ENCODE measurements at regions of chr7 and their contacts with region 1.

Region 1: GRCh38 chr7:1175967-1176851 is 16.2 kb upstream of the ZFAND2A start:
- DNase-seq: peak; percentile 54 to 88 (median 78)
- ATAC-seq: peak; percentile 70
- H3K4me3 ChIP-seq: peak overlapping the region; percentile 2 to 10
- H3K4me3 Mint-ChIP-seq: peak overlapping the region; percentile 70
- H3K27ac ChIP-seq: no peak overlapping the region
- H3K27ac Mint-ChIP-seq: no peak overlapping the region
- H3K4me1 ChIP-seq: peaks cover 10% of the 10 kb centered on the region
- H3K4me1 Mint-ChIP-seq: peaks cover 9% of the 10 kb centered on the region
- H3K27me3 ChIP-seq: no peaks in the 10 kb centered on the region
- H3K27me3 Mint-ChIP-seq: peaks cover 8% of the 10 kb centered on the region
- CTCF ChIP-seq: peak; percentile 94

Region 2: GRCh38 chr7:322111-322671 is 854.0 kb before region 1 on chr7:
- CTCF ChIA-PET with region 1: interaction called, 3 read pairs
- POLR2A ChIA-PET with region 1: no interaction called
- intact Hi-C with region 1: loop called in 1 of 2 experiments (anchors 10 kb)
- DNase-seq: peak; percentile 73 to 94 (median 86)
- ATAC-seq: peak; percentile 100
- H3K4me3 ChIP-seq: no peak overlapping the region
- H3K4me3 Mint-ChIP-seq: no peak overlapping the region
- H3K27ac ChIP-seq: no peak overlapping the region
- H3K27ac Mint-ChIP-seq: no peak overlapping the region
- H3K4me1 ChIP-seq: peaks cover 4% of the 10 kb centered on the region
- H3K4me1 Mint-ChIP-seq: no peaks in the 10 kb centered on the region
- H3K27me3 ChIP-seq: no peaks in the 10 kb centered on the region
- H3K27me3 Mint-ChIP-seq: peaks cover 27% of the 10 kb centered on the region
- CTCF ChIP-seq: peak; percentile 82

Region 3: GRCh38 chr7:1073142-1073977 is 102.8 kb before region 1 on chr7:
- CTCF ChIA-PET with region 1: no interaction called
- POLR2A ChIA-PET with region 1: no interaction called
- intact Hi-C with region 1: no loop called
- DNase-seq: no peak
- ATAC-seq: no peak
- H3K4me3 ChIP-seq: no peak overlapping the region
- H3K4me3 Mint-ChIP-seq: no peak overlapping the region
- H3K27ac ChIP-seq: no peak overlapping the region
- H3K27ac Mint-ChIP-seq: no peak overlapping the region
- H3K4me1 ChIP-seq: no peaks in the 10 kb centered on the region
- H3K4me1 Mint-ChIP-seq: no peaks in the 10 kb centered on the region
- H3K27me3 ChIP-seq: no peaks in the 10 kb centered on the region
- H3K27me3 Mint-ChIP-seq: no peaks in the 10 kb centered on the region
- CTCF ChIP-seq: no peak

Region 4: DNA sequence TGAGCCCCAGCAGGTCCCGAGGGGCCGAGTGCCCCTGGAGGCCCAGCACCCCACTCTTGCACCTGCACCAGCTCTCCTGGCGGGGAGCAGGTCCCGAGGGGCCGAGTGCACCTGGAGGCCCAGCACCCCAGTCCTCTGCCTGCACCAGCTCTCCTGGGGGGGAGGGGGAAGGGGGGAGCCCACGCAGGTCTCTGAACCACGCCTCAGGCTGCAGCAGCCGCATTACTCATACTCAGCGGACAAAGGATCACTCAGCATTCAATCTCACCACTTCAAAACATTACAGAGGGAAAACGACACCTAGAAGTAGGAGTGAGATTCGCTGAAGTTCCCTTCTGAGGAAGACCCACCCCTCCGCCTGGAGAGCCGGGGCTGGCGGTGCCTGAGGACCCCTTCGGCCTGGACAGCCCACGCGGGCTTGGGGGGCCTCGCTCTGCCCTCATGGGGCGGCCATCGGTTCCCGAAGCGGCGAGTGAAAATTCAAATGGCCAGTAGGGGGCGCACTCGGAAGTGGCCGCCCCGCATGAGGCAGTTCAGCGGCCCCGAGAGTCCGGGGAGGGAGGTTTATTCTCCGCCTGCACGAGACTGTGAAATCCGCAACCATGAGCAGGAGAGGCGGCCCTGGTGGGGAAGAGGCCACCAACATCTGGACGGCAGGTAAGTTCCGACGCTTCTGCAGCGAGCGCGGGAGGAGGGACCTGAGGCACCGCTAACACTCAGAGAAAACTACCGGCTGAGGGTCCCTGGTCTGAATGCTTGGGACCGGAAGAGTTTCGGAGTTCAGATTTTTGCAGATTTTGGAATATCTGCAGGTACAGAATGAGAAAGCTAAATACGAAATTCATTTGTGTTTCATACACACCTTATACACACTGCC is 89.4 kb before region 1 on chr7:
- CTCF ChIA-PET with region 1: interaction called, 9 read pairs
- POLR2A ChIA-PET with region 1: no interaction called
- intact Hi-C with region 1: loop called (anchors 1 to 2 kb)
- DNase-seq: peak; percentile 42 to 88 (median 75)
- ATAC-seq: peak; percentile 84
- H3K4me3 ChIP-seq: peak overlapping the region; percentile 18 to 58
- H3K4me3 Mint-ChIP-seq: peak overlapping the region; percentile 75
- H3K27ac ChIP-seq: no peak overlapping the region
- H3K27ac Mint-ChIP-seq: no peak overlapping the region
- H3K4me1 ChIP-seq: peaks cover 11% of the 10 kb centered on the region
- H3K4me1 Mint-ChIP-seq: peaks cover 11% of the 10 kb centered on the region
- H3K27me3 ChIP-seq: no peaks in the 10 kb centered on the region
- H3K27me3 Mint-ChIP-seq: no peaks in the 10 kb centered on the region
- CTCF ChIP-seq: peak; percentile 98

Region 5: DNA sequence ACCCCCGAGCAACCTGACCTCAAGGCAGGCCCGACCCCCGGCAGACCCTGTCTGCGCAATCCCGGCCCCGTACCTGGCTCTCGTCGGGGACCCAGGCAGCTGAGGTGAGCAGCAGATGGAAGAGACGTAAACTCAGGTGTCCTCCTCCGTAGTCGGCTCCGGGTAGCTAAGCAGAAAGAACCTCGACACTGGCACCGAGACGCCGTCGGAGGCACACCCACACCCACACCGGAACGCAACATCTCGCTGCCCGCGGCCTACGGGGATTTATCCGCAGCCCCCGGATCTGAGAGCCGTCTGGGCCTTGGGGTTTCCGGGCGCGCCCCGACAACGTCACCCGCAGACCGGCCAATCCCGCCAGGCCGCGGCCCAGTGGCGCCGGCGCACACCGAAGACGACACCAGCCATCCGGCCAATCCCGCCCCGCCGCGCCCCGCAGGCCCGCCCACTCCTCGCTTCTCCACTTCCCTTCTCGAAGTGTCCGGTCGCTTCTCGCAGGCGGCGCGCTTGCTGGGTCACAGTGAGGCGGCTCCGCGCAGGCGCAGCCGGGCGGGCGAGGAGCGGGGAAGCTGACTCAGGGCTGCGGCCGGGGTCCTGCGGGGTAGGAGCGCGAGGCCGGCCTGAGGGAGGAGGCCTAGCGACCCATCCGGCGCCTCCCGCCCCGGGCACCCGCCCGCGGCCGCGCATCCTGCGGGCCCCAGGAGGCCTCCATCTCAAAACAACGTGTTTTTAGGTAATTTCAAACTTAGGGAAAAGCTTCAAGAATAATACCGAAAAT is 16.1 kb before region 1 on chr7 and contains the start of gene ZFAND2A:
- CTCF ChIA-PET with region 1: interaction called, 10 read pairs
- POLR2A ChIA-PET with region 1: no interaction called
- intact Hi-C with region 1: no loop called
- DNase-seq: peak; percentile 97 to 99 (median 99)
- ATAC-seq: peak; percentile 98
- H3K4me3 ChIP-seq: peak within 1 kb of the TSS; percentile 98
- H3K4me3 Mint-ChIP-seq: peak within 1 kb of the TSS; percentile 90
- H3K27ac ChIP-seq: peak within 1 kb of the TSS; percentile 96 to 99
- H3K27ac Mint-ChIP-seq: peak within 1 kb of the TSS; percentile 95
- H3K4me1 ChIP-seq: peaks cover 22% of the 10 kb centered on the region
- H3K4me1 Mint-ChIP-seq: peaks cover 27% of the 10 kb centered on the region
- H3K27me3 ChIP-seq: no peaks in the 10 kb centered on the region
- H3K27me3 Mint-ChIP-seq: no peaks in the 10 kb centered on the region
- CTCF ChIP-seq: no peak
- total RNA-seq, gene ZFAND2A: 100 to 105 TPM

Region 6: DNA sequence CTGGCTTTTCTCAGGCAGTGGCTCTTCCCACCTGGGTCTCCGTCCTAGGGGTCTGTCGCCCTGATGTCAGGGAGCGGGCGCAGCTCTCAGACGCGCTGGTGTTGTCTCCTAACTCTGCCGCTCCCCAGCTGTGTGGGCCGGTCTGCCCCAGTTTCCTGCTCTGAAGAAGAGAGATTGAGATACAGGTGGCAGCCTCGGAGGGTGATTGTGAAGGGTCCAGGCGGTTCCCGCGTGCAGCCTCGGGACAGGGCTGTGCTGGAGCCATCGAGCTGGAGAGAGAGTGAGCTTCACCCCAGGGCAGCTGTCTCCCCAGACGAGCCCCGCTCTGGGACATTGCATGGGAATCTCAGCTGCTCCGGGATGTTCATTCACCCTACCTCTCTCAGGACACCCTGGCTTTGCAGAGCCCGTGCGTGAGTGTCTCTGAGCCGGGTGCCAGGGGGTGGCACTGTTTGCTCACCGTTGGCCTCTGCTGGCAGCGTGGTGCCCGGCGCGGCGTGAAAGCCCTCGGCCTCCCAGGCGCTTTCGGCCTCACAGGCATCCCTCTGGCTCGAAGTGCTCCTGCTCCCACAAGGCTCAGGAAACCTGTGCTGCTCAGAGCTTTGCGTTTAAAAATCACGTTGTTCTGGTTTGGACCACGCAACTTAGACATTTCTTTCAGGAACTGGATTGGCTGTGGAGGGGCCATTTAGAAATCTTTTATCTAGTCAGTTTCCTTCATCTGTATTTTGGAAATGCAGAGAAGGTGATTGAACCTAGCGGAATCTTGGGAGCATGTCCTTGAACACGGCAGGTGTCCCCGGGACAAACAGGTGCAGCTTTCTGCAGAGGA is 17.6 kb after region 1 on chr7:
- CTCF ChIA-PET with region 1: interaction called, 18 read pairs
- POLR2A ChIA-PET with region 1: no interaction called
- intact Hi-C with region 1: no loop called
- DNase-seq: peak in 8 of 9 experiments; percentile 11 to 73 (median 41)
- ATAC-seq: no peak
- H3K4me3 ChIP-seq: no peak overlapping the region
- H3K4me3 Mint-ChIP-seq: no peak overlapping the region
- H3K27ac ChIP-seq: no peak overlapping the region
- H3K27ac Mint-ChIP-seq: no peak overlapping the region
- H3K4me1 ChIP-seq: peaks cover 12% of the 10 kb centered on the region
- H3K4me1 Mint-ChIP-seq: peaks cover 8% of the 10 kb centered on the region
- H3K27me3 ChIP-seq: no peaks in the 10 kb centered on the region
- H3K27me3 Mint-ChIP-seq: peaks cover 17% of the 10 kb centered on the region
- CTCF ChIP-seq: peak; percentile 15

Region 7: DNA sequence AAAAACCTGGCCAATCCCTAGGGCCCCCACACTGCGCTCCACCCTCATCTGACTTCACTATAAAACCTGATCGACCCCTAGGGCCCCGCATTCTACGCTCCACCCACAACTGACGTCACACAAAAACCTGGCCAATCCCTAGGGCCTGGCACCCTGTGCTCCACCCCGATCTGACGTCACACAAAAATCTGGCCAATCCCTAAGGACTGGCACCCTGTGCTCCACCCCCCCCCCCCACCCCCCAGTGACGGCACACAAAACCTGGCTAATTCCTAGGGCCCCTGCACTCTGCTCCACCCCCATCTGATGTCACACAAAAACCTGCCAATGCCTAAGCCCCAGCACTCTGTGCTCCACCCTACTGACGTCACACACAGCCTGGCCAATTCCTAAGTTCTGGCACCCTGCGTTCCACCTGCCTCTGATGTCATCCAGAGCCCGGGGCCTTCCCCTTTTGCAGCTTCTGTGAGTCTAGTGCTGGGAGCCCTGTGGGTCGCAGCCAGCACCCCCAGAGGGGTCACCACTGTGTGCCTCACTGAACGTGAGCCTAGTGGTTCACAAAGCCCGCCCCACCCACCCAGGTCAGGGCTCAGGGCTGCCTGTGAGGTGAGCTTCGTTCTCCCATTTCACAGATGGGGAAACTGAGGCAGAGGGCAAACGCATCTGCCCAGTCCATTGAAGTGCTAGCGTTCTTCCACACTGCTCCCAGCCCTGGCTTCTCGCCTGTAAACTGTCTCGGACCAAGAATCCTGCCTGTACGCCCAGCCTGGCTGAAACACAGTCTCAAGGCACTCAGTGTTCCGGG is 242.5 kb after region 1 on chr7:
- CTCF ChIA-PET with region 1: no interaction called
- POLR2A ChIA-PET with region 1: no interaction called
- intact Hi-C with region 1: loop called in 1 of 2 experiments (anchors 5 kb)
- DNase-seq: no peak
- ATAC-seq: no peak
- H3K4me3 ChIP-seq: no peak overlapping the region
- H3K4me3 Mint-ChIP-seq: no peak overlapping the region
- H3K27ac ChIP-seq: no peak overlapping the region
- H3K27ac Mint-ChIP-seq: no peak overlapping the region
- H3K4me1 ChIP-seq: peaks cover 22% of the 10 kb centered on the region
- H3K4me1 Mint-ChIP-seq: peaks cover 20% of the 10 kb centered on the region
- H3K27me3 ChIP-seq: peaks cover 0 to 6% of the 10 kb centered on the region in 2 experiments
- H3K27me3 Mint-ChIP-seq: peaks cover 6% of the 10 kb centered on the region
- CTCF ChIP-seq: no peak